ENCODE measurements at regions of chr11 and their contacts with region 1.

Region 1: DNA sequence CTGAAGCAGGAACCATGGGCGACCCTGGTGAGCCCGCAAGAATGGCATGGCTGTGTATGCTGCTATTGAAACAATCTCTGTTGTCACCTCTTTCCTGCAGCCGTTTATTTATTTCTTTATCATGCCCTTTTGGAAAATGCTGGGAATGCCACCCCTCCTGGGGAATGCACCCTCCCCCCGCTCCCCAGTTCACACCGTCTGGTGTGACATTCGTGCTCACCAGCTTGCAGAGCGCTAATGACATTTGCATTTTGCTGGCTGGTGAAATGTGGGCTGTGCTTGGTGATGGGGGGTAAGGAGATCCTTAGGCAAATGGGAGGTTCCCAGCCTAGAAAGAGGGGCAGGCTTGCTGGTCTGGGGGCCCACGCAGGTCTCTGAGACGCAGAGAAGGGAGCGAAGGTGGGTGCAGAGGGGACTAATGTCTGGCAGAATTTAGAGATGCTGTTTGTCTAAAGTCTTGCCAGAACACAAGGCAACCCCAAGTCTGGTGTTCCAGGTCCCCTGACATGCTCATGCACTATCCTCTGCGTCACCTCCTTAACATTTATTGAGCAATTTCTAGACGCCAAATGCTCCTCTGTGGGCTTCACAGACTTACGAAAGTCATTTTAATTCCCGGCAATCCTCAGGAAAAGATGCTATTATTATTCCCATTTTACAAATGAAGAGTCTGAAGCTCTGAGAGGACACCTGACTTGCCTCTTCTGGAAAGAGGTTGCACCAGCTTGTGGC is 91.7 kb downstream of the TP53I11 start:
- DNase-seq: no peak
- ATAC-seq: peak in 1 of 2 donors; percentile 51

Region 2: DNA sequence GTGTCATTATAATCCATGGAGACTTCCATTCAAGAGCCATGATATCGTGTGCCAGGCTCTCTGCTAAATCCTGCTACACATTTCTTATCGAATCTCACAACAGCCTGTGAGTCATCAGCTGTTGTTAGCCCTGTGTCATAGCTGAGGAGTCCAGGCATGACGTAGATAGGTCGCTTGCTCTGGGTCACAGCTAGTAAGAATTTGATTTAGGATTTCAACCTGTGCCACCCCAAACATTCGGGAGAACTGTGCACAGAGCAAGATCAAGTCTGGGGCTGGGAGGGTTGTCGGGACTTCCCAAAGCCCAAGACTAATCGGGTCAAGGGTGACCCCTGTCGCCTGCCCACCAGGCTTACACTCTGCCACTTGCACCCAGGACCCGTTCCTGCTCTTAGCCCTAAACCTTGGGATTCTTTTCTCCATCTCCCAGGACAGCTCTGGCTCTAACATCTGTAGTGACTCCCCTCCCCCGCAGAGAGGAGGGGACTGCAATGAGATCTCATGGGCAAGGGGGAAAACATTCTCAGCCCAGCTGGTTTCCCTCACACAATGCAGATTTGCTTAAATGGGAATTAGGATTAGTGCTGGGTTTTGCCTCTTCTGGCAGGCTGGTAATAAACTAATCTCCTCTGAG is 97.9 kb before region 1 on chr11:
- intact Hi-C with region 1: loop called in 1 of 2 experiments (anchors 5 kb)
- DNase-seq: peak; percentile 73
- ATAC-seq: peak; percentile 91 to 92

Measured in left cardiac atrium (tissue), 4 donors.